Dendritic cell treated with granulocyte-macrophage colony-stimulating factor and Interleukin-4, amounts not matched to agents 40 ng/mL and 50 ng/mL, for 4 days (primary cell): ENCODE measurements at regions of chr14 and their contacts with region 1.

Region 1: DNA sequence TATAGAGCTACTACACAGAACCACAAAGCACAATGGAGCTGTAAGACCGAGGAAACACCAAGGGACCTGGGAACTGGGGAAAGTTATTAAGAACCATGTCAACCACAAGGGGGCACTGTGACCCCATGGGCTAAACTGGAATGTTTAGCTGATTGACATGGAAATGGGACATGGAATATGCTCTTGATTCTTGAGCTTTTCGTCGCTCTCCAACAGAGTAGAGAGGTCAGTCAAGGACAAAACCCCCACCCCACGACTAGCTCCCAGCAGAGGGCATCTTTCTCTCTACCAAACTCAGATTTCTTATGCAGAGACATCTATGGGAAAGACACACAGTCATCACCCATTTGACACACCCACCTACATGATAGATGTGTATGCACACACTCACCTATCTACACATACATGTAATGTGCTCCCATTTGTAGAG is 10.1 kb downstream of the NDRG2 start:
- H3K4me3 Mint-ChIP-seq: no peak overlapping the region
- H3K27ac Mint-ChIP-seq: no peak overlapping the region
- H3K4me1 Mint-ChIP-seq: peaks cover 51% of the 10 kb centered on the region
- H3K27me3 Mint-ChIP-seq: peaks cover 23% of the 10 kb centered on the region

Region 2: GRCh38 chr14:21039585-21040369 is 25.0 kb after region 1 on chr14:
- intact Hi-C with region 1: loop called (anchors 1 kb)
- H3K4me3 Mint-ChIP-seq: no peak overlapping the region
- H3K27ac Mint-ChIP-seq: peak overlapping the region; percentile 31
- H3K4me1 Mint-ChIP-seq: peaks cover 60% of the 10 kb centered on the region
- H3K27me3 Mint-ChIP-seq: peaks cover 27% of the 10 kb centered on the region

Region 3: GRCh38 chr14:21097636-21098075 is 82.9 kb after region 1 on chr14:
- intact Hi-C with region 1: loop called (anchors 2 kb)
- H3K4me3 Mint-ChIP-seq: peak overlapping the region; percentile 68
- H3K27ac Mint-ChIP-seq: peak overlapping the region; percentile 54
- H3K4me1 Mint-ChIP-seq: peaks cover 55% of the 10 kb centered on the region
- H3K27me3 Mint-ChIP-seq: no peaks in the 10 kb centered on the region